ENCODE measurements at regions of chr6 and their contacts with region 1.

Region 1: GRCh38 chr6:141483598-141484061 is 649.1 kb upstream of the GJE1 start:
- DNase-seq: peak in 8 of 9 experiments; percentile 15 to 91 (median 58)
- ATAC-seq: peak; percentile 94
- H3K4me3 ChIP-seq: peak overlapping the region; percentile 41 to 46
- H3K4me3 Mint-ChIP-seq: peak overlapping the region; percentile 76
- H3K27ac ChIP-seq: peak overlapping the region; percentile 65 to 85
- H3K27ac Mint-ChIP-seq: peak overlapping the region; percentile 93
- H3K4me1 ChIP-seq: peaks cover 17% of the 10 kb centered on the region
- H3K4me1 Mint-ChIP-seq: peaks cover 48% of the 10 kb centered on the region
- H3K27me3 ChIP-seq: no peaks in the 10 kb centered on the region
- H3K27me3 Mint-ChIP-seq: no peaks in the 10 kb centered on the region
- CTCF ChIP-seq: no peak

Region 2: GRCh38 chr6:141464490-141464889 is 19.1 kb before region 1 on chr6:
- CTCF ChIA-PET with region 1: no interaction called
- POLR2A ChIA-PET with region 1: no interaction called
- intact Hi-C with region 1: loop called in 1 of 2 experiments (anchors 2 kb)
- DNase-seq: peak in 2 of 9 experiments; percentile 35 to 48
- ATAC-seq: no peak
- H3K4me3 ChIP-seq: no peak overlapping the region
- H3K4me3 Mint-ChIP-seq: no peak overlapping the region
- H3K27ac ChIP-seq: no peak overlapping the region
- H3K27ac Mint-ChIP-seq: no peak overlapping the region
- H3K4me1 ChIP-seq: no peaks in the 10 kb centered on the region
- H3K4me1 Mint-ChIP-seq: peaks cover 8% of the 10 kb centered on the region
- H3K27me3 ChIP-seq: no peaks in the 10 kb centered on the region
- H3K27me3 Mint-ChIP-seq: no peaks in the 10 kb centered on the region
- CTCF ChIP-seq: no peak

Region 3: DNA sequence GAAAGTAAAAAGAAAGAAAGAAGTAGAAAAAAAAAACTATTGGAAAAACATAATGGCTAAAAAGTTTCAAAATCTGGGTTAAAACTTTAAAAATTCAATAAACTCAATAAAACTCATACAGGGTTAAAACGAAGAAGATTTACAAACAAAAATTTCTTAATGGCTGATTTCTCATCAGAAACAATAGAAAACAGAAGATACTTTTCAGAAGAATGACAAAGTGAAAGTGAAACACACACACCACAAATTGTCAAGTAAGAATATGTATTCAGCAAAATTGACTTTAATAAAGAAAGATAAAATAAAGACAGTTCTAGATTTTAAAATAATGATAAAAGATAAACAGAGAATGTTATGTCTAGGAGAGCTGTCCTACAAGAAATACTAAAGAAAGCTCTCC is 30.2 kb after region 1 on chr6:
- CTCF ChIA-PET with region 1: no interaction called
- POLR2A ChIA-PET with region 1: no interaction called
- intact Hi-C with region 1: loop called in 1 of 2 experiments (anchors 5 kb)
- DNase-seq: peak in 1 of 9 experiments; percentile 22
- ATAC-seq: no peak
- H3K4me3 ChIP-seq: no peak overlapping the region
- H3K4me3 Mint-ChIP-seq: no peak overlapping the region
- H3K27ac ChIP-seq: no peak overlapping the region
- H3K27ac Mint-ChIP-seq: no peak overlapping the region
- H3K4me1 ChIP-seq: no peaks in the 10 kb centered on the region
- H3K4me1 Mint-ChIP-seq: peaks cover 9% of the 10 kb centered on the region
- H3K27me3 ChIP-seq: no peaks in the 10 kb centered on the region
- H3K27me3 Mint-ChIP-seq: no peaks in the 10 kb centered on the region
- CTCF ChIP-seq: no peak